Naive thymus-derived CD4-positive, alpha-beta T cell (primary cell): ENCODE measurements at regions of chr11 and their contacts with region 1.

Region 1: DNA sequence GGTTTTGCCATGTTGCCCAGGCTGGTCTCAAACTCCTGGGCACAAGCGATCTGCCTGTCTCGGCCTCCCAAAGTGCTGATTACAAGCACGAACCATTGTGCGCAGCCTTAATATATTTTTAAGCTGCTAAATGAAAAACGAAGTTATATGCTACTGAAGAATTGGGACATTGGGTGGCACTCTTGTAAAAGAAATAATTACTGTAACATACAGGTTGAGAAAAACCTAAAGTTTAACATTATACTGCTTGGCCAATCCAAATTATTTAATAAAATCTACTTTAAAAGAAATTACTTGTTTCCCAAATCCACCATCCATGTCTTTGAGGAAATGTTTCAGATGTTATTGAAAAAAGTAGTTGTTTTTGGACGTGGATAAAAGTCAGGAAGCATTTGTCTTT is 37.9 kb upstream of the ARHGAP32 start:
- DNase-seq: peak in 3 of 9 donors; percentile 2 to 36 (median 15)
- ATAC-seq: no peak
- H3K4me3 ChIP-seq: no peak overlapping the region
- H3K4me3 Mint-ChIP-seq: no peak overlapping the region
- H3K27ac ChIP-seq: no peak overlapping the region
- H3K27ac Mint-ChIP-seq: no peak overlapping the region
- H3K4me1 ChIP-seq: no peaks in the 10 kb centered on the region
- H3K4me1 Mint-ChIP-seq: no peaks in the 10 kb centered on the region
- H3K27me3 ChIP-seq: no peaks in the 10 kb centered on the region
- H3K27me3 Mint-ChIP-seq: peaks cover 0 to 7% (median 0%) of the 10 kb centered on the region in 5 donors

Region 2: GRCh38 chr11:128859563-128860441 is 370.2 kb before region 1 on chr11:
- CTCF ChIA-PET with region 1: no interaction called
- POLR2A ChIA-PET with region 1: no interaction called
- intact Hi-C with region 1: no loop called
- DNase-seq: peak; percentile 55 to 83 (median 66)
- ATAC-seq: peak; percentile 95
- H3K4me3 ChIP-seq: no peak overlapping the region
- H3K4me3 Mint-ChIP-seq: peak overlapping the region in 3 of 10 donors; percentile 12 to 26 (median 18)
- H3K27ac ChIP-seq: no peak overlapping the region
- H3K27ac Mint-ChIP-seq: no peak overlapping the region
- H3K4me1 ChIP-seq: peaks cover 0 to 4% of the 10 kb centered on the region in 2 donors
- H3K4me1 Mint-ChIP-seq: peaks cover 0 to 9% (median 5%) of the 10 kb centered on the region in 7 donors
- H3K27me3 ChIP-seq: no peaks in the 10 kb centered on the region
- H3K27me3 Mint-ChIP-seq: peaks cover 0 to 16% (median 0%) of the 10 kb centered on the region in 5 donors

Region 3: DNA sequence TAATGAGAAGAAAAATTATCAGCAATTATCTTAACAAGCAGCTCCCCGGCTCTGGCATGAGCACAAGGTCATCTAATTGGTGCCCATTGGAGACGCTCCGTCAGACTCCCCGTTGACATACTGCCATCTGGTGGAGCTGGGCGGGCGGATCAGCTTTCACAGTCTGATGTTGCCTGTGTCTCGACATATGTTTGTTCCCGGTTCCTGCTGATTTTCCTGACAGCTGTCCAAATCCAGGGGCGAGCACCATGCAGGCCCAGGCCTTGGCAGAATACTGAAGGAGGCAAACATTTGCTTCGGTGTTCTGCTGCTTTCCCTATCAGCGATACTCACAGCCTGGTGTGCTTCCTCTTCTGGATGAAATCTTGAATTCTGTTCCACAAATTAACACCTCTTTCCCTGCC is 101.9 kb after region 1 on chr11:
- CTCF ChIA-PET with region 1: interaction called, 12 read pairs
- POLR2A ChIA-PET with region 1: no interaction called
- intact Hi-C with region 1: loop called (anchors 1 kb)
- DNase-seq: peak; percentile 18 to 65 (median 45)
- ATAC-seq: peak; percentile 77
- H3K4me3 ChIP-seq: no peak overlapping the region
- H3K4me3 Mint-ChIP-seq: peak overlapping the region in 1 of 10 donors; percentile 34
- H3K27ac ChIP-seq: no peak overlapping the region
- H3K27ac Mint-ChIP-seq: no peak overlapping the region
- H3K4me1 ChIP-seq: no peaks in the 10 kb centered on the region
- H3K4me1 Mint-ChIP-seq: peaks cover 0 to 8% (median 3%) of the 10 kb centered on the region in 7 donors
- H3K27me3 ChIP-seq: no peaks in the 10 kb centered on the region
- H3K27me3 Mint-ChIP-seq: peaks cover 0 to 6% (median 0%) of the 10 kb centered on the region in 5 donors

Region 4: GRCh38 chr11:129375751-129376657 is 146.0 kb after region 1 on chr11 and contains the start of gene BARX2:
- CTCF ChIA-PET with region 1: no interaction called
- POLR2A ChIA-PET with region 1: no interaction called
- intact Hi-C with region 1: no loop called
- DNase-seq: peak in 1 of 9 donors; percentile 54
- ATAC-seq: no peak
- H3K4me3 ChIP-seq: no peak within 1 kb of the TSS
- H3K4me3 Mint-ChIP-seq: peak within 1 kb of the TSS; percentile 56 to 86 (median 78)
- H3K27ac ChIP-seq: no peak within 1 kb of the TSS
- H3K27ac Mint-ChIP-seq: peak within 1 kb of the TSS in 1 of 9 donors; percentile 61
- H3K4me1 ChIP-seq: peaks cover 0 to 7% of the 10 kb centered on the region in 2 donors
- H3K4me1 Mint-ChIP-seq: peaks cover 18 to 38% (median 32%) of the 10 kb centered on the region in 7 donors
- H3K27me3 ChIP-seq: peaks cover 0 to 12% of the 10 kb centered on the region in 2 donors
- H3K27me3 Mint-ChIP-seq: peaks cover 75 to 85% (median 79%) of the 10 kb centered on the region in 5 donors
- total RNA-seq, gene BARX2: 0.44 TPM in 1 of 5 experiments, not detected in the others